ENCODE measurements at regions of chr12 and their contacts with region 1.

Region 1: GRCh38 chr12:64273527-64274403 is 51.7 kb upstream of the KICS2 start:
- DNase-seq: peak; percentile 32
- H3K4me3 Mint-ChIP-seq: no peak overlapping the region
- H3K27ac Mint-ChIP-seq: no peak overlapping the region
- H3K4me1 Mint-ChIP-seq: no peaks in the 10 kb centered on the region
- H3K27me3 Mint-ChIP-seq: peaks cover 2% of the 10 kb centered on the region

Region 2: GRCh38 chr12:64072916-64073575 is 200.7 kb before region 1 on chr12:
- CTCF ChIA-PET with region 1: no interaction called
- intact Hi-C with region 1: no loop called
- DNase-seq: no peak
- H3K4me3 Mint-ChIP-seq: no peak overlapping the region
- H3K27ac Mint-ChIP-seq: no peak overlapping the region
- H3K4me1 Mint-ChIP-seq: no peaks in the 10 kb centered on the region
- H3K27me3 Mint-ChIP-seq: no peaks in the 10 kb centered on the region

Region 3: DNA sequence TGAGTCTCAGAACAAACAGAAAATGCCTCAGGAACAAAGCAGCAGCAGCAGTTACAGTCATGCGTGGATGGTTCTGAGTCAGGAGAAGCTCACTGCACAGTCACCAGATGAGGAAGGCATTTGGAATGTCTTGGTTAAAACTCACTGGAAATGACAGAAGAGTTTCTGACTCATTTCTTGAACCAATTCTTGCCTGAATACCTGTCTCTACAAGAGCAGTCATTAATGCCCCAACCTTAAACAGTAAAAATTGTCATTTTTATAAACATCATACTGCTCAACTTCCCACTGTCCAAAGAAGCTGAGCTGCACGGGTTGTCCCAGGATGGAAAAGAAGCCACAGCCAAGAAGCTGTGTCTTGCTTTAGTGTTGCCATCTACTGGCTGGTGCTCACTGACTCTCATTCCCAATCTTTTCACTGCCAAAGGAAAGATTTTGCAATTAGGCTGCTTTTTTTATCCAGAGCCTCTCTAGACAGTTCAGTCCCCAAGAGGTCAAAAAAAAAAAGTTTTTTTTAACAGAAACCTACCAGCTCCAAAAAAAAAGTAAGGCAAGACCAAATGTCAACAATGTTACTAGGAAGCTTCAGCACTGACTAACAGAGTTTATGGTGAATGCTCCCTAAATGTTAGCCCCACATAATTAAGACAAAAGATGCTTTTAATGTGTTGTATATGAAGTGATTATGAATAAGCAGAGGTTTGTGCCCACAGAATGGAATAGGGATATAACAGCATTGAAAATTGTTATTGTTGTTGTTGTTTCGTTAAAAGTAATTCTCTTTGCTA is 92.1 kb before region 1 on chr12:
- CTCF ChIA-PET with region 1: no interaction called
- intact Hi-C with region 1: no loop called
- DNase-seq: no peak
- H3K4me3 Mint-ChIP-seq: no peak overlapping the region
- H3K27ac Mint-ChIP-seq: no peak overlapping the region
- H3K4me1 Mint-ChIP-seq: no peaks in the 10 kb centered on the region
- H3K27me3 Mint-ChIP-seq: no peaks in the 10 kb centered on the region

Region 4: DNA sequence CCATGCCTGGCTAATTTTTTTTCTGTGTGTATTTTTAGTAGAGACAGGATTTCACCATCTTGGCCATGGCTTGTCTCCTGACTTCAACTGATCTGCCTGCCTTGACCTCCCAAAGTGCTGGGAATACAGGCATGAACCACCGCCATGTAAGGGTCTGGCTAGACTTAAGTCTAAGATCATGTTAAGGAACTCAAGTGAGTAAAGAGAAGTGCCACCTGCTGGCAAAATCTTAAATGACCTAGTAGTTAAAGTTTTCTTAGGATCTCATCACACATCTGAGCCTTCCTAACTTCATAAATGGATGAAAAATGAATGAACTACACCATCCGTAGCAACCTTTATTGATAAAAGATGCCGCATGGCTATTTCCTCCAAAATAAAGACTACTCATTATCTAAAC is 118.5 kb after region 1 on chr12:
- CTCF ChIA-PET with region 1: interaction called, 7 read pairs
- intact Hi-C with region 1: loop called (anchors 1 kb)
- DNase-seq: peak; percentile 23
- H3K4me3 Mint-ChIP-seq: no peak overlapping the region
- H3K27ac Mint-ChIP-seq: no peak overlapping the region
- H3K4me1 Mint-ChIP-seq: peaks cover 11% of the 10 kb centered on the region
- H3K27me3 Mint-ChIP-seq: no peaks in the 10 kb centered on the region